H1 (cell line): ENCODE measurements at regions of chr7 and their contacts with region 1.

Region 1: DNA sequence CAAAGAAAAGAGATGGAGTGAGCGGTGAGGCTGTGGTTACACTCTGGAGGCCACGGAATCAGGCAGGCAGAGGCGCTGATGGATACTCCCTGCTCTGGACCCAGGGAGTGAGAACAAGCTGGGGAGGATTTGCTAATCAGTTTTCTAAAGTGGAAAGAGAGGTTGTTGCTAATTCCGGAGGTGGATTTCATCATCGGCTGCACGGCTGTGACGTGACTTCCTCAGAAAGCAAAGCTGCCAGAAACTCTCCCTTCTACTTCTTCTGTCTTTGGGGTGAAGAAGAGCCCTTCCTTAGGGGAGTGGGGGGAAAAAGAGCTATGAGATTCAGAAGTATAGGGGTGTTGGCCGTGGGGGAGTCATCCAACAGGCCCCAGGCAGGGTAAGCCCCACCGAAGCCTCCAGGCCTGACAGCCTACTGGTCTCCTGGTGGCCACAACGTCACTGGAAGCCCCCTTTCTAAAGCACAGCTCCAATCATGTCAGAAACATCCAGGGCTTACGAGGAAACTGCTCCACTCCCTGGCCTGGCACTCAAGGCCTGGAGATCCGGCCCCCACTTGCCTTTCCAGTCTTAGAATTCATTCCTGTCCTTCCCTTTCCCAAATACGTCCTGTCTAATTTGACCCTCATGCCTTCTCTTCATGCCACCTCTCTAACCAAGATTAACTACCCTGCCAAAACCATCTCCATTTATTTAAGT is 114.5 kb downstream of the HIP1 start:
- DNase-seq: no peak
- H3K4me3 ChIP-seq: no peak overlapping the region
- H3K27ac ChIP-seq: no peak overlapping the region
- H3K4me1 ChIP-seq: peaks cover 0 to 10% (median 5%) of the 10 kb centered on the region in 4 experiments; a peak in 5 of 7 replicates
- H3K27me3 ChIP-seq: no peaks in the 10 kb centered on the region
- CTCF ChIP-seq: no peak
- EP300 ChIP-seq: no peak
- POLR2A ChIP-seq: no peak
- RAD21 ChIP-seq: no peak

Region 2: GRCh38 chr7:75611548-75612178 is 12.6 kb before region 1 on chr7:
- CTCF ChIA-PET with region 1: interaction called, 13 read pairs
- POLR2A ChIA-PET with region 1: interaction called, 13 read pairs
- DNase-seq: peak in 1 of 2 experiments; percentile 68
- H3K4me3 ChIP-seq: no peak overlapping the region
- H3K27ac ChIP-seq: no peak overlapping the region; the same call in 1 of the 2 replicates
- H3K4me1 ChIP-seq: peaks cover 0 to 11% (median 5%) of the 10 kb centered on the region in 4 experiments; a peak in 4 of 7 replicates
- H3K27me3 ChIP-seq: no peaks in the 10 kb centered on the region
- CTCF ChIP-seq: no peak
- EP300 ChIP-seq: no peak
- POLR2A ChIP-seq: no peak
- RAD21 ChIP-seq: no peak; a peak in 1 of 4 replicates